HepG2 (cell line): ENCODE measurements at regions of chr3 and their contacts with region 1.

Region 1: GRCh38 chr3:193665370-193665989 is 72.5 kb downstream of the OPA1 start:
- DNase-seq: peak; percentile 25
- ATAC-seq: no peak
- H3K4me3 ChIP-seq: no peak overlapping the region
- H3K27ac ChIP-seq: no peak overlapping the region
- H3K4me1 ChIP-seq: peaks cover 14% of the 10 kb centered on the region; the same call in 1 of the 2 replicates
- H3K27me3 ChIP-seq: no peaks in the 10 kb centered on the region
- CTCF ChIP-seq: peak; percentile 34
- EP300 ChIP-seq: no peak
- POLR2A ChIP-seq: no peak
- RAD21 ChIP-seq: no peak

Region 2: DNA sequence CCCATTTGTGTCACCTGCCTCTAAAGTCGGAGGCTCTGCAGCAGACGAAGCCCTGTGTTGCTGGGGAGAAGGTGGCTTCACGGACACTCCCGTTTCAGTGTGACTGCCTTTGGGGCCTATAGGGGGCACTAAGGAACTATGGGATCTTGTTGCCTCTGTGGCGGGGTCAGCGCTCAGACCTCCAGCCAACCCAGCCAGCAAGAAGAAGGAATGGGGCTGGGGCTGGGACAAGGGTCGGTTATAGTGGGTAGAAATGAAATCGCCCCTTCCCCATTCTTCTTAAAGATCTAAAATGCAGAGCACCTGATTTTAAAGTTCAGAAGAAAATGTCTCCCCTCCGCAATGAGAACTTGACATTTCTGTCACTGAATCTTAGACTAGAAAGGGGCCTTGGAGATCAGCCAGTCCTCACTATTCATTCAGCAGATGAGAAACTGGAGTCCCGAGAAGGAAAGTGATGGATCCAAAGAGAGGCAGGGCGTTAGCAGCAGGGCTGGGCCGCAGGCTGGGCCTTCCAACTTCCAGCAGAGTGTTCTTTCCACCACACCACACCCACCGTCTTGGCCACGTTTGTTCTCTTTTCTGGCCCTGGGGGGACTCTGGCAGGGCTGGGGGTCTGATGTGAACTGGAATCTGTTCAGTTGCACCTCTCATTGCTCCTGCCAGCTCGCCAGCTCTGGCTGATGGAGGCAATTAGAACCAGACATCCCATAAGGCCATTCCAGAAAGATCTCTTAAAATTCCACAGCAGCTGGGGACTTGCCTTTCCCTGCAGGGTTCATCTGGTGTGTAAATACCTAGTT is 122.9 kb after region 1 on chr3:
- CTCF ChIA-PET with region 1: no interaction called
- POLR2A ChIA-PET with region 1: no interaction called
- in situ Hi-C with region 1: no loop called
- intact Hi-C with region 1: loop called (anchors 2 kb)
- DNase-seq: peak; percentile 64
- ATAC-seq: peak; percentile 98
- H3K4me3 ChIP-seq: no peak overlapping the region
- H3K27ac ChIP-seq: no peak overlapping the region
- H3K4me1 ChIP-seq: no peaks in the 10 kb centered on the region
- H3K27me3 ChIP-seq: peaks cover 0 to 16% of the 10 kb centered on the region in 2 experiments; a peak in 3 of 5 replicates
- CTCF ChIP-seq: peak; percentile 92
- EP300 ChIP-seq: no peak
- POLR2A ChIP-seq: no peak
- RAD21 ChIP-seq: peak; percentile 85